Calu3 (cell line): ENCODE measurements at regions of chr1 and their contacts with region 1.

Region 1: GRCh38 chr1:181936768-181937581 is 124.5 kb downstream of the ZNF648 start:
- DNase-seq: peak; percentile 73
- H3K4me3 Mint-ChIP-seq: no peak overlapping the region
- H3K27ac Mint-ChIP-seq: no peak overlapping the region
- H3K4me1 Mint-ChIP-seq: no peaks in the 10 kb centered on the region
- H3K27me3 Mint-ChIP-seq: no peaks in the 10 kb centered on the region
- CTCF ChIP-seq: peak; percentile 58

Region 2: DNA sequence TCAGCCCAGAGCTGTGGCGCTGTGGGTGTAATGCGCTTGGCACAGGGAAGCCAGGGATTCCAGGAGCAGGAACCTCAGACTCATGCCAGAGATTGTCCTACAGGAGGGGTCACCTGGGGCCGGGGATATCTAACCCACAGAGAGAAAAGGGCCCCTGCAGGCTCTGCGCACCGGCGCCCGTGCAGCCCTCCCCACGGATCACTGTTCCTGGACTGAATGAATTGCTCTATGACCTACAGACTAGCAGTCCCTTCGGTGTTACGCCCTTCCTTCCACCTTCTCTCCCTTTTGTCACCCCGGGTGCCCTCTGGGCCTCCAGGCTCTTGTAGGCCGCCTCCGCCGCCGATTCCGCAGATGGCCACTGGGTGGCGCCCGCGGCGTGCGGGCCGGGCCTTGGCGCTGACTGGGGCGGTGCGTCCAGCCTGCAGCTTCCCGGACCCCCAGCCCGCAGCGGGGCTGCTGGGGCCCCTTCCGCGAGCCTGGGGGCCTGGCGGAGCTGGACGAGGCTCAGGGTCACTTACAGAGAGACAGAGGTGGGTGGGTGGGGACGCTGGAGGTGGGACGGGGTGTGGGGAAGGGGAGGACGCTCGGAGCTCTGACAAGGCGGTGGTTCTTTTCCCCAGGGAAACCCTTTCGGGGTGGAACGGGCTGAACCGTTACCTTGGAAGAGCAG is 747.1 kb before region 1 on chr1:
- CTCF ChIA-PET with region 1: interaction called, 6 read pairs
- intact Hi-C with region 1: loop called (anchors 2 kb)
- DNase-seq: peak; percentile 89
- H3K4me3 Mint-ChIP-seq: peak overlapping the region; percentile 34
- H3K27ac Mint-ChIP-seq: no peak overlapping the region
- H3K4me1 Mint-ChIP-seq: peaks cover 8% of the 10 kb centered on the region
- H3K27me3 Mint-ChIP-seq: peaks cover 88% of the 10 kb centered on the region
- CTCF ChIP-seq: peak; percentile 98

Region 3: DNA sequence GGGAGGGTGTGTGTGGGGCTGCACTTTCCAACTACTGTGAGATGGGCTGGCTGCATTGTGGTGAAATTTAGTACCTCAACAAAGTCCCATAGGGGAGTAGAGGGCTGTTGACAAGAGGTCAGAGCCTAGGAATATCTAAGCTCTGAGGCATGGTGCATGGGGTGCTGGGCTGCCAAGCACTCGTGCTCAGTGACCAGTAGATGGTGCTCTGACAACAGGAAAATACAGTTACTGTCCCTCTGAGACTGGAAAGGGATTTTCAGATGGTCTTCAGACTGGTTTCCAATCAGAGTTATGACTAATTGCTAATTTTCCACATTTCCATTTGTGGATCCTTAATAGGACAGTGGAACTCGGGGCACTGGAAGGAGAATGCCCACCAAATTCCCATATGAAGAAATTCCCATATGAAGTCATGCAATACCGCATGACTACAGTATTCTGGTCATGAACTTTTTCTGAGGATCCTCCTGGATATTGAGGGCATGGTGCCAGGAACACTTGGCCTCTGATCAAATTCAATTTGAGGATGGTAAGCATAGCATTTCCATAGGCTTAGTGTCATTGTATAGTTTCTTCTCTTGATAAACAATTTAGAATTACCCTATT is 457.7 kb before region 1 on chr1:
- CTCF ChIA-PET with region 1: interaction called, 24 read pairs
- intact Hi-C with region 1: loop called (anchors 1 kb)
- DNase-seq: peak; percentile 59
- H3K4me3 Mint-ChIP-seq: no peak overlapping the region
- H3K27ac Mint-ChIP-seq: no peak overlapping the region
- H3K4me1 Mint-ChIP-seq: no peaks in the 10 kb centered on the region
- H3K27me3 Mint-ChIP-seq: peaks cover 39% of the 10 kb centered on the region
- CTCF ChIP-seq: peak; percentile 66

Region 4: DNA sequence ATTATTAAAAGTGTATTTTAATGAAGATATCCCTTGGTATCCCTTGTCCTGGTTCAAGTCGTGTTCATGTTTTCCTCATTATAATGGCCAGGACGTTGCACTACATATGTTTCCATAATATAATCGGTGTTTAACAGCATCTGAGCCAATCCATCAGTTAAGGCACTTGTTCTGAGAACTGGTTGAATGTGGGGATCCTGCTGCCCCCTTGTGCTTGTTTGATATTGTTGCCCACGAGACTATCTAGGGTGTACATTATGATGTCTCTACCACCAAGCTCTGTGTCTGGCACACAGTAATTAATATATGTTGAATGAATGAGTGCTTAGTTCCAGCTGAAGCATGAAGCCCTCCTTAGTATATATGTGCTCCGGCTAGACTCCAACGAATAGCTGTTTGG is 260.7 kb before region 1 on chr1:
- CTCF ChIA-PET with region 1: interaction called, 4 read pairs
- intact Hi-C with region 1: loop called (anchors 1 kb)
- DNase-seq: peak; percentile 42
- H3K4me3 Mint-ChIP-seq: no peak overlapping the region
- H3K27ac Mint-ChIP-seq: no peak overlapping the region
- H3K4me1 Mint-ChIP-seq: no peaks in the 10 kb centered on the region
- H3K27me3 Mint-ChIP-seq: peaks cover 41% of the 10 kb centered on the region
- CTCF ChIP-seq: peak; percentile 12

Region 5: DNA sequence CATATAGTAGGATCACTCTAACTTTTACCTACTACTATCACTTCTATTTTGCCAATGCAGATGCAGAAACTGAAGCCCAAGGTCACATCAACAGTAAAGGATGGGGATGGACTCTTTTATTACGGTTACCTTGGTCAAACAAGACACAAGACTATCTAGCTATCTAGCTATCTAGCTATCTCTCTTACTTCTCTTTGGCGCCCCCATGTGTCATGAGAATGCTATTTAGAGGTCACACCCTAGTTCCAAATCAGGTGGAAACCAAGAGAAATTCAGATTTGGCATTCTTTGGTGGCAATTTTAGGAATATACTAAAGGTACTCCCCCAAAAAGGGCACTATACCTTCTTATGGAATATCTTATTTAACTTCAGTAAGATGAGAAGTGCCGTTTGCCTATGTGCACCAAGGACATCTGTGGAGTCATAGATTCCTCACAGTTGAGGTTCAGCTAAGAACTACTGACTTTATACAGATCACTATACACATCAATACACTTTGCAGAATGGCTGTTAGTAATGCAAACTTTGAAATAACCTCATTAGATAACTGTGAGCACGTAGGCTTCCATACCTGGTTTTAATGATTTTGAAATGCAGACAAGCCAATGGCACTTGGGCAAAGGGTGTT is 117.8 kb after region 1 on chr1:
- CTCF ChIA-PET with region 1: interaction called, 10 read pairs
- intact Hi-C with region 1: loop called (anchors 10 kb)
- DNase-seq: peak; percentile 75
- H3K4me3 Mint-ChIP-seq: no peak overlapping the region
- H3K27ac Mint-ChIP-seq: no peak overlapping the region
- H3K4me1 Mint-ChIP-seq: no peaks in the 10 kb centered on the region
- H3K27me3 Mint-ChIP-seq: peaks cover 2% of the 10 kb centered on the region
- CTCF ChIP-seq: peak; percentile 62

Region 6: GRCh38 chr1:182229921-182230491 is 293.0 kb after region 1 on chr1:
- CTCF ChIA-PET with region 1: no interaction called
- intact Hi-C with region 1: no loop called
- DNase-seq: no peak
- H3K4me3 Mint-ChIP-seq: no peak overlapping the region
- H3K27ac Mint-ChIP-seq: no peak overlapping the region
- H3K4me1 Mint-ChIP-seq: peaks cover 13% of the 10 kb centered on the region
- H3K27me3 Mint-ChIP-seq: no peaks in the 10 kb centered on the region
- CTCF ChIP-seq: no peak

Region 7: DNA sequence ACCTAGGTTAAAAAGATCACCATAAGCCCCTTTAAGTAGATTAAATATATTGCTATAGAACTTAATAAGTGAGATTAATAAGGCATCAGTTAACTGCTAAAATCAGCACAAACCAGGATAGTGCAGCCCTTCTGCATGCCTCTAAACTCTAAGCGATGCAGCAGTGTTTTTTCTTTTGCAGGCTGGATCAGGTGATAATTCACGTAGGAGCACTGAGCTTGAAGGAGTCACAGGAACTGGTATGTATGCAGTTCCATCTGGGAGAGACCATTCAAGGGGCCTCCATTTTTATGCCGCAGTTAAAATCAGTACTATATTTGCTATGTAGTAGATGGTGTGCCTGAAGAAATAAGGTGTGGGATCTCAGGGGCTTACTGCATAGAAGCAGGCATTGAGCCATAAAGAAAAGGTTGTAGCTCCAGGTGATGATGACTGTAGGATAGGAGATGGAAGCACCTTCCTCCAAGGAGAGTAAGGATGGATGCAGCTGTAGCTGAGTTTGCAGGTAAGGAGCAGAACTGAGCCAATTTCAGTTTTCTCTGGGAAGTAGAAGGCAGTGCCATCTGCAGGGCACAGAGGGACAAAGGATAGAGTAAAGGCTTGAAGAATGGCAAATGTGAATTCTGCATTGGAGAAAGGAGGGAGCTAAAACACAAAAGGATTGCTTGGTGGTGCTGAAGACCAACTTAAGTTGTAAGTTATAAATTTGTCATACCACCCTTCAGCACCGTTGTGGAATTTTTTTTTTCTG is 875.2 kb after region 1 on chr1:
- CTCF ChIA-PET with region 1: no interaction called
- intact Hi-C with region 1: no loop called
- DNase-seq: no peak
- H3K4me3 Mint-ChIP-seq: no peak overlapping the region
- H3K27ac Mint-ChIP-seq: no peak overlapping the region
- H3K4me1 Mint-ChIP-seq: peaks cover 6% of the 10 kb centered on the region
- H3K27me3 Mint-ChIP-seq: no peaks in the 10 kb centered on the region
- CTCF ChIP-seq: no peak